ENCODE measurements at regions of chr1 and their contacts with region 1.

Region 1: GRCh38 chr1:61641578-61642336 is 83.2 kb downstream of the TM2D1 start:
- DNase-seq: peak; percentile 63 to 84 (median 78)
- H3K4me3 ChIP-seq: no peak overlapping the region
- H3K27ac ChIP-seq: peak overlapping the region in 3 of 5 donors; percentile 18 to 43 (median 42)
- H3K4me1 ChIP-seq: peaks cover 0 to 16% of the 10 kb centered on the region in 2 donors
- H3K27me3 ChIP-seq: no peaks in the 10 kb centered on the region
- CTCF ChIP-seq: peak; percentile 47 to 73 (median 64)
- POLR2A ChIP-seq: no peak

Region 2: DNA sequence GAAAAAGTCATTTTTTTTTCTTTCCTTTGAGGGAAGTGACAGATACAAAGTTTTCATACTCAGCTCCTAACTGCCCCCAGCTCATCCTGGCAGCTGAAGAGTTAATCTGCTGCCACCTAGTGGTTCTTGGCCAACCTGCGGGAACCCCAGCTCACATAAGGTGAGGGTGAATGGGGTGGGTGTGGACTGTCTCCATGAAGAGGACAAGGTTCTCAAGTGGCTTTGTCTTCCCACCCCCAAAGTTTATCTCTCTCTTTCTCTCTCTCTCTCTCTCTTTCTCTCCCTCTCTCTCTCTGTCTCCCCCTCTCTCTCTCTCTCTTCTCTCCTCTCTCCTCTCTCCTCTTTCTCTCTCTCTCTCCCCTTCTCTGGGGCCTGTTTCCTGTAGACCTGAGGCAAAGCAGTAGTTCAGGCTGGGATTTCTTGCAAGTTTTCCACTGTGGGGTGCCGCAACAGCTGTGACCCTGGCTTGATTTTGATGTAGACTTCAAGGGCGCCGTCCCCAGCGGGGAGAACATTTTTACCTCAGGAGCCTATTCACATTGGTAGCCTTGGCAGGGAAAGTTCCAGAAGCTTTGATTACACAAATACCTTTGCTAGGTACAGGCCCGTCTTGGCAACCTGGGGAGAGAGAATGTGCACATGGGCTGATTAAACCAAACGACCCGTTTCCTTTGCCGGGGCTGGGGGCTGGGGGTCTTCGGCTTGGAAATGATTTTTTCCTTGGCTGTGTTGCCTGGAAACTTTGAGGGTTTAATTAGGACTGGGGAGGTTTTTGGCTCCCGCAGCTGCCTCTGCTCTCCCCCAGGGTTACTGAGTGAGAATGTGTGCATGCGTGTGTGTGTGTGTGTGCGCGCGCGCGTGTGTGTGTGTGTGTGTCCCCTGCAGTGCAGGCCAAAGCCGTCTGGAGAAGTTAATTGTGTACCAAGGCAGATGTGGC is 52.8 kb before region 1 on chr1:
- intact Hi-C with region 1: no loop called
- DNase-seq: peak; percentile 36 to 80 (median 66)
- H3K4me3 ChIP-seq: no peak overlapping the region
- H3K27ac ChIP-seq: no peak overlapping the region
- H3K4me1 ChIP-seq: no peaks in the 10 kb centered on the region
- H3K27me3 ChIP-seq: no peaks in the 10 kb centered on the region
- CTCF ChIP-seq: peak; percentile 47 to 72 (median 61)
- POLR2A ChIP-seq: no peak

Region 3: DNA sequence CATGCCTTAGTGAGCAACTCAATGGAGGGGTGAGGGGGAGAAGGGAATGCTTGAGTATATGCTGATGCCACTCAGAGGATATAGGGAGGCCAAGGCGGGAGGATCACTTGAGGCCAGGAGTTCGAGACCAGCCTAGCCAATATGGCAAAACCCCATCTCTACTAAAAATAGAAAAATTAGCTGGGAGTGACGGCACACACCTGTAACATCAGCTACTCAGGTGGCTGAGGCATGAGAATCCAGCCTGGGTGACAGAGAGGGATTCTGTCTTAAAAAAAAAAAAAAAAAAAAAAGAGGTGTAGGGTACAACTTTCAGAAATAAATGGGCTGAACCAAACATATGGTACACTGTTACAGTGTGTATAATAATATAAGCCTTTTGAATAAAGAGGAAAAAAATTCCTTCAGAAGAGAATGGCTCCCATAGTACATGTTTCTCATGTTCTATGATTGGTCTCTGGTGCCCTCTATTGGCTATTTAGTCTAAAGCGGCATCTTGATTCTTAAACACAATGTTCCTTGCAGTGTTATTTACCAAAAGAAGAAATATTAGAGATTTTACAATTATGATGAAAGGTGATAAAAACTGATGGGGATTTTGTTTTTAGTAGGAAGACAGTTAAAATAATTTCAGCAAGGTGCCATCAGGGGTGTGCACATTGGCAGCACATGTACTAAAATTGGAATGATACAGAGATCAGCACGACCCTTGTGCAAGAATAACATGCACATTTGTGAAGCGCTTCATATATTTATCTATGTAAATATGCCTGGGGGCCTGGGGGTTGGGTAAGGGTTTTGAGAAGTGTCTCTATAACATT is 210.3 kb after region 1 on chr1:
- intact Hi-C with region 1: loop called in 1 of 2 experiments (anchors 5 kb)
- DNase-seq: peak in 1 of 7 donors; percentile 16
- H3K4me3 ChIP-seq: no peak overlapping the region
- H3K27ac ChIP-seq: no peak overlapping the region
- H3K4me1 ChIP-seq: no peaks in the 10 kb centered on the region
- H3K27me3 ChIP-seq: no peaks in the 10 kb centered on the region
- CTCF ChIP-seq: peak; percentile 39 to 76 (median 72)
- POLR2A ChIP-seq: no peak